Endothelial cell of umbilical vein (primary cell): ENCODE measurements at regions of chr17 and their contacts with region 1.

Region 1: GRCh38 chr17:5438716-5439445 is at the start of gene C1QBP:
- DNase-seq: peak; percentile 96
- H3K4me3 ChIP-seq: peak within 1 kb of the TSS; percentile 64 to 94 (median 68)
- H3K27ac ChIP-seq: peak within 1 kb of the TSS; percentile 47
- H3K4me1 ChIP-seq: peaks cover 17% of the 10 kb centered on the region
- H3K27me3 ChIP-seq: no peaks in the 10 kb centered on the region
- CTCF ChIP-seq: peak; percentile 99
- POLR2A ChIP-seq: peak; percentile 91
- total RNA-seq, gene C1QBP: 201 and 218 TPM in 2 replicates

Region 2: DNA sequence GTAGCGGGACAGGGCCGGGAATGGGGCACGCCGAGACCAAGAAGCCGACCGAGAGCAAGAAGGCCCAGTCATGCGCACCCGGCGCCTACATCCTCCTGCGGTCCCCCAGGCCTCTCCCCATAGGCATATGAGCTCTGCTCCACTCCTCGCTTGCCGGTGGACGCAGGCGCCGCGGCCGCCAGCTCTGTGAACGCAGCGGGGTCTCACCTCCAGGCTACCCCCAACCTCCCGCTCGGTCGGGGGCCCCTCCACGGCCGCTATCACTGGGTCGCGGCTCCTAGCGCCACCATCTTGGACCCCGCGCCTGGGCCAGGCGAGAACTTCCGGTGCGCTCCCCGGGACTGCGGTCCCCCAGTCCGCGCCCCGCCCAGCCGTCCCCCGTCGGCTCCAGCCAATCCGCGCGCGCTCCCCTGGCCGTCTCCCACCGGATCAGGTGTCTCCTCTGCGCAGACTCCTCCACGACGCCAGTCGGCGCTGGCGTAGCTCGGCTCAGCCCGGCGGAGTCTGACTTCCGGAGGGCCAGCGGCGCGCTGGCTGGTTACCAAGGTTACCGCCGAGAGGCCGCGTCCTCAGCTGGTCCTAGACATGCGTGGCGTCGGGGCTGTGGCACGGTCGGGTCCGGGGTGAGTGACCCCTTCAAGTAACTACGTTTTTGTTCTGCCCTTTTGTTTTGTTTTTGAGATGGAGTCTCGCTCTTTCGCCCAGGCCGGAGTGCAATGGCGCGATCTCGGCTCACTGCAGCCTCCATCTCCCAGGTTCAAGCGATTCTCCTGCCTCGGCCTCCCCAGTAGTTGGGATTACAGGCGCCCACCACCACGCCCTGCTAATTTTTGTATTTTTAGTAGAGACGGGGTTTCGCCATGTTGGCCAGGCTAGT is 247.1 kb before region 1 on chr17 and contains the start of gene ZNF594:
- CTCF ChIA-PET with region 1: interaction called, 5 read pairs
- POLR2A ChIA-PET with region 1: interaction called, 3 read pairs
- dilution Hi-C with region 1: no loop called
- intact Hi-C with region 1: loop called (anchors 2 kb)
- DNase-seq: peak; percentile 93
- H3K4me3 ChIP-seq: peak within 1 kb of the TSS; percentile 42 to 77 (median 76)
- H3K27ac ChIP-seq: peak within 1 kb of the TSS; percentile 42
- H3K4me1 ChIP-seq: peaks cover 3% of the 10 kb centered on the region
- H3K27me3 ChIP-seq: no peaks in the 10 kb centered on the region
- CTCF ChIP-seq: peak; percentile 74 to 86
- POLR2A ChIP-seq: peak; percentile 85
- total RNA-seq, gene ZNF594: 5.0 and 5.8 TPM in 2 replicates

Region 3: DNA sequence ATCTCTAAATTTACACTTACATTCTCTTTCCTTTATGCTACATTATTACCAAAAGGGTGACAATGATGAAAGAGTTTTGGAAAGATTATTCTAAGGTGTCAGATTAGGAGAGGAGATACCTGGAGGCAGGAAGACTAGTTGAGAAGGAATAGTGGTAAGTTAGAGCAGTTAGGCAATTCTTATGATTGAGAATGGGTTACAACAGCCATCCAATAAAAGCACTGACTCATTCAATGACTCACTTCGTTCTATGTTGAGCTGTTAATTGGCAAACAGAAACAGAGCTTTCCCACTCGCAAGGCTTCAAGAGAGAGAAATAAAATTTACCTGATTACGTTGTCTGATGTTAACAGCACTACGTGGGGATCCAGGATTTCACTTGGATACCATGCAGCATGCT is 25.2 kb before region 1 on chr17:
- CTCF ChIA-PET with region 1: interaction called, 14 read pairs
- POLR2A ChIA-PET with region 1: no interaction called
- dilution Hi-C with region 1: no loop called
- intact Hi-C with region 1: no loop called
- DNase-seq: peak; percentile 76
- H3K4me3 ChIP-seq: no peak overlapping the region
- H3K27ac ChIP-seq: peak overlapping the region; percentile 46
- H3K4me1 ChIP-seq: peaks cover 15% of the 10 kb centered on the region
- H3K27me3 ChIP-seq: no peaks in the 10 kb centered on the region
- CTCF ChIP-seq: no peak
- POLR2A ChIP-seq: no peak

Region 4: GRCh38 chr17:5419356-5419958 is 19.4 kb before region 1 on chr17 and contains the start of gene NUP88:
- CTCF ChIA-PET with region 1: interaction called, 27 read pairs
- POLR2A ChIA-PET with region 1: interaction called, 9 read pairs
- dilution Hi-C with region 1: no loop called
- intact Hi-C with region 1: loop called (anchors 1 kb)
- DNase-seq: peak; percentile 99
- H3K4me3 ChIP-seq: peak within 1 kb of the TSS; percentile 75 to 94 (median 89)
- H3K27ac ChIP-seq: peak within 1 kb of the TSS; percentile 79
- H3K4me1 ChIP-seq: peaks cover 13% of the 10 kb centered on the region
- H3K27me3 ChIP-seq: no peaks in the 10 kb centered on the region
- CTCF ChIP-seq: no peak
- POLR2A ChIP-seq: peak; percentile 49
- total RNA-seq, gene NUP88: 87.4 and 95.8 TPM in 2 replicates

Region 5: DNA sequence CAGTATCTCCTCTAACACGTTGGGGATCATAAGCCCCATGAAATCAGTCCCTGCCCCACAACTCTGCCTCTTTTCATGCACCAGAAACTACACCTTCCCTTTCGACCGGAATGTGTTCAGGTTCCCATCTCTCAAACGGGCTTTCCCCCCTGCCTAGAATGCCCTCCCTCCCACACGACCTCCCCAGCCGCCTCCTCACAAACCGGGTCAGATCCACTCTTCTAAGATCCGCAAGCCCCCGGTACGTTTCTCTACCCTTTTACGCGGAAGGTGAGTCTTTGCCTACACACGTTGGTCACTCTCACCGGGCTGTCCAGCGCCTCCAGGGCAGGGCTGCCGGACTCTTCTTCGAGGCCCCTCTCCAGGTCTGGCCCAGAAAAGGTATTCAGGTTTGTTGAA is 29.2 kb after region 1 on chr17:
- CTCF ChIA-PET with region 1: interaction called, 10 read pairs
- POLR2A ChIA-PET with region 1: no interaction called
- dilution Hi-C with region 1: no loop called
- intact Hi-C with region 1: loop called (anchors 2 kb)
- DNase-seq: no peak
- H3K4me3 ChIP-seq: peak overlapping the region; percentile 77 to 92 (median 87)
- H3K27ac ChIP-seq: no peak overlapping the region
- H3K4me1 ChIP-seq: peaks cover 7% of the 10 kb centered on the region
- H3K27me3 ChIP-seq: no peaks in the 10 kb centered on the region
- CTCF ChIP-seq: no peak
- POLR2A ChIP-seq: no peak